ENCODE measurements at regions of chr5 and their contacts with region 1.

Region 1: DNA sequence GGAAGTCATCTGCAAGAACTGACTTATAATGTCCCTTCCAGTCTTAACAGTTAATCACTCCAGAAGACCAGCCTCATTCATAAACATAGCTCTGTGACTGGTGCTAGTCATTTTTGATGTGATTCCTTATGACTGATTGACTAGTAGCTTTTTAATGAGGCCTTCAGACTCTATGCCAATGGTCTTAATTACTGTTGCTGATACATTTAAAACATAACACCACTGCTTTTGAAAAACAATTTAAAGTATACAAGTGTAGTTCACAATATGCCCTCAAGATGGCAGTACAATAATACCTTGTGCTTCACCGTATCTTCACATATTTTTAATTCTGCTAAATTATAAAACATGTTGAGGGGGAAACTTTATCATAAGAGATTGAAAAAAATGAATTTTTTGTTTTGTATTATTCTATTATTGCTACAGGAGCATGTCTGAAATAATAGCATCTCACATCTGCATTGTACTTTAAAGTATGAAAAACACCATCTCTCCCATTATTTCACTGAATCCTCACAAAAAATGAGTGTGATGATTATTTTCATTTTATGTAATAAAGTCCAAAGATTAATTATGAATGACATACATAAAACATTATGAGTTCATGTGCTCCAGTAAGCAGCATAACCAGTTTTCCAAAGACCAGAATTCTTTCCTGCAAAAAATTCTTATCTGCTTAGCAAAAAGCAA is 55.2 kb upstream of the SHISAL2B start:
- DNase-seq: no peak
- H3K4me3 ChIP-seq: no peak overlapping the region
- H3K27ac ChIP-seq: no peak overlapping the region
- H3K4me1 ChIP-seq: peaks cover 0 to 3% (median 1%) of the 10 kb centered on the region in 4 experiments; a peak in 3 of 7 replicates
- H3K27me3 ChIP-seq: no peaks in the 10 kb centered on the region
- CTCF ChIP-seq: peak in 2 of 3 experiments; percentile 41 to 49; a peak in 2 of 4 replicates
- EP300 ChIP-seq: no peak
- POLR2A ChIP-seq: no peak
- RAD21 ChIP-seq: peak; percentile 66 to 86

Region 2: DNA sequence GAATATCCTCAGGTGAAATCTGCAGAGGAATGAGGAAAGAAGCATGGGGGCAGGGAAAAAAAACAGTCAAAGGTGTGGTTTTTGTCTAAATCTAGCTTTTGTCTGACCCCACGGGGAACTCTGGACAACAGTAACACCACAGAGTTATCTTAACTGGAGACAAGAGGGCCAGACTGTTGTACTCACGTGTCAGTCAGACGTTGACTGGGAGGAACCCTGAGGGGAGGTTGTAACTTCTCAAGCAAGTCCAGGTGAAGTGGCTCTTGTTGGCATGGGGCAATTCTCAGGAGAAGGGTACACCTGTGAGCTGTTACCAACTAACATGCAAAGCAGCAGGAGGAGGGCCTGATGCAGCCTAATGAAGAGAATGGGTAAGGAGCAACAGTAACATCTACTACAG is 11.0 kb after region 1 on chr5:
- CTCF ChIA-PET with region 1: interaction called, 39 read pairs
- POLR2A ChIA-PET with region 1: no interaction called
- DNase-seq: no peak
- H3K4me3 ChIP-seq: no peak overlapping the region
- H3K27ac ChIP-seq: no peak overlapping the region
- H3K4me1 ChIP-seq: peaks cover 0 to 9% (median 4%) of the 10 kb centered on the region in 4 experiments; a peak in 2 of 7 replicates
- H3K27me3 ChIP-seq: no peaks in the 10 kb centered on the region
- CTCF ChIP-seq: no peak
- EP300 ChIP-seq: no peak
- POLR2A ChIP-seq: no peak
- RAD21 ChIP-seq: no peak

Region 3: DNA sequence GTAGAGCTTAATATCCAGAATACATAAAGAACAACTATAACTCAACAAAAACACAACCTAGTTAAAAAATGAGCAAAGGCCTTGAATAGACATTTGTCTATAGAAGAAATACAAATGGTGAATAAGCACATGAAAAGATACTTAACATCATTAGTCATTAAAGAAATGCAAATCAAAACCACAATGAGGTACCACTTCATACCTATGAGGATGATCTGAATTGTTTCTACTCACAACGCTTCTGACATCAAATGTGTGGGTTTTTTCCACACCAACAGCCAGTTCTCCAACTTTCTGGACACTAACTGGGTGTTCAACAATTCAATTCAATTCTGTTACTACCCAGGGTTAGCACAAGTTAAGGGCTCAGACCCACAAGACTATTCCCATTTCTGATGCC is 111.3 kb after region 1 on chr5:
- CTCF ChIA-PET with region 1: interaction called, 11 read pairs
- POLR2A ChIA-PET with region 1: no interaction called
- DNase-seq: no peak
- H3K4me3 ChIP-seq: no peak overlapping the region
- H3K27ac ChIP-seq: no peak overlapping the region
- H3K4me1 ChIP-seq: peaks cover 0 to 2% (median 0%) of the 10 kb centered on the region in 4 experiments; a peak in 2 of 7 replicates
- H3K27me3 ChIP-seq: no peaks in the 10 kb centered on the region
- CTCF ChIP-seq: no peak
- EP300 ChIP-seq: no peak
- POLR2A ChIP-seq: no peak
- RAD21 ChIP-seq: no peak

Region 4: DNA sequence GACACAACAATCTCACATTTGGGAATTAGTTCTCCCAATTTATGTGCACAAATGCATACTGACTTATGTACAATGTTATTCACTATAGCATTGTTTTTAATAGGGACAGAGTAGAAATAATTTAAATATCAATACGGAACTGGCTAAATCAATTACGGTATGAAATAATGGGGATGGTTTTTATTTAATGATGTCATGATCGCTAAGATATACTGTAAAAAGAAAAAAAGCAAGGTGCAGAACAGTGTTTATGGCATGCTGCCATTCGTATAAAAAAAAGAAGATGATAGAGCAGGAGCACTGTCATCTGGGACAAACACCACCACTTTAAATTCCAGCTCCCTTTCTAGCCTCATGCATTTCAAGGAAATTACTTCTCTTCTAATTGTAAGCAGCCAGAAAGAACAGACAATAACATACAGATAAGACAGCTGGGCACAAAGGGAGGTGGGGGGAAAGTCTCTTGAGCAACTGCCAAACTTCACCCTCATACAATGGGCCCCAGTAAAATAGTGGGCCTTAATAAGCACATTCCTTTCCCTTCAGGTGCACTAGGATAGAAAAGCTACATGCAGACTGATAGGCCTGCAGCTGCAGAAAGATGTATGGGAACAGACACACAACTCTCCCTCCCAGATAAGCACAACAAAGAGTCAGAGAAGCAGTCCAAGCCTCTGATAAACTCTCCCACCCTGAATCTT is 125.0 kb after region 1 on chr5:
- CTCF ChIA-PET with region 1: interaction called, 14 read pairs
- POLR2A ChIA-PET with region 1: no interaction called
- DNase-seq: no peak
- H3K4me3 ChIP-seq: no peak overlapping the region
- H3K27ac ChIP-seq: no peak overlapping the region
- H3K4me1 ChIP-seq: no peaks in the 10 kb centered on the region; a peak in 1 of 7 replicates
- H3K27me3 ChIP-seq: no peaks in the 10 kb centered on the region
- CTCF ChIP-seq: no peak
- EP300 ChIP-seq: no peak
- POLR2A ChIP-seq: no peak
- RAD21 ChIP-seq: no peak

Region 5: DNA sequence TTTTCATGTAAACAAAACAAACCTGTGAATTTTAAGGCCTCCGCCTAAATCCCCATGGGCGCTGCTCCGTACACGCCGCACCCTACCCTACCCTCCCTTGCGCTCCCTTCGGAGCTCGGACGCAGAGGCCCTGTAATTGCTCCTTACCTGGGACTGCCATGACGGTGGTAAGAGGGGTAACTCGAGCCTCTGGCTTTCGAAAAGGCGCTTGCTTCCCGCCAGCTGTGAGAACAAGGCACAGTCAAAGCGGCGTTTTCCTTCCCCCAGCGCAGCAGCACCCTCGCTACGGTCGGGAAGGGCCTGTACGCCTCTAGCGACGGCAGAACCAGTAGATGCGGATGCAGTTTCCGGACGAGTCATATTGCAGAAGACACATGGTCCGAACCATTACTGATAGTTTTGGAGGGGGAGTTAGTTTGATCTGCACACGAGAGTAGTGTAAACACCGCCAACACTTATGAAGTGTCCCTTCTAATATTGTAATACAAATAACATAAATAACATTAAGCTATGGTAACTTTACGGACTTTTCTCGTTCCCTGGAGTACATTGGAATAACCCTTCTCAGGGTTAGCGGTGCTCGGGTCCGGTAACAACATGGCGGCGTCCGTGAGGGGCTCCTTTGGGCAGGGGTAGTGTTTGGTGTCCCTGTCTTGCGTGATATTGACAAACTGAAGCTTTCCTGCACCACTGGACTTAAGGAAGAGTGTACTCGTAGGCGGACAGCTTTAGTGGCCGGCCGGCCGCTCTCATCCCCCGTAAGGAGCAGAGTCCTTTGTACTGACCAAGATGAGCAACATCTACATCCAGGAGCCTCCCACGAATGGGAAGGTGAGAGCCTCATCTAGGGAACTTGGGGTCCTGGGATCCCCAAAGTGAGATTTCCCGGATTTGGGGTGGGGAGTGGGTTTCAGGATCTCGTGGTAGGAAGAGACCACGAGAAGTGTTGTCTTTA is 133.5 kb after region 1 on chr5 and contains the starts of genes CWC27 and SREK1IP1:
- CTCF ChIA-PET with region 1: interaction called, 14 read pairs
- POLR2A ChIA-PET with region 1: interaction called, 4 read pairs
- DNase-seq: peak; percentile 69 to 85
- H3K4me3 ChIP-seq: peak within 1 kb of the TSS; percentile 79 to 100 (median 98)
- H3K27ac ChIP-seq: peak within 1 kb of the TSS; percentile 97
- H3K4me1 ChIP-seq: peaks cover 0 to 9% (median 3%) of the 10 kb centered on the region in 4 experiments; a peak in 4 of 7 replicates
- H3K27me3 ChIP-seq: no peaks in the 10 kb centered on the region
- CTCF ChIP-seq: peak in 1 of 3 experiments; percentile 6; a peak in 1 of 4 replicates
- EP300 ChIP-seq: peak in 1 of 2 experiments; percentile 95; a peak in 2 of 3 replicates
- POLR2A ChIP-seq: peak; percentile 85 to 95
- RAD21 ChIP-seq: peak; percentile 15 to 28; a peak in 2 of 4 replicates
- total RNA-seq, gene CWC27: 41.1 and 43.4 TPM in 2 replicates
- total RNA-seq, gene SREK1IP1: 37.2 and 39.0 TPM in 2 replicates

Region 6: DNA sequence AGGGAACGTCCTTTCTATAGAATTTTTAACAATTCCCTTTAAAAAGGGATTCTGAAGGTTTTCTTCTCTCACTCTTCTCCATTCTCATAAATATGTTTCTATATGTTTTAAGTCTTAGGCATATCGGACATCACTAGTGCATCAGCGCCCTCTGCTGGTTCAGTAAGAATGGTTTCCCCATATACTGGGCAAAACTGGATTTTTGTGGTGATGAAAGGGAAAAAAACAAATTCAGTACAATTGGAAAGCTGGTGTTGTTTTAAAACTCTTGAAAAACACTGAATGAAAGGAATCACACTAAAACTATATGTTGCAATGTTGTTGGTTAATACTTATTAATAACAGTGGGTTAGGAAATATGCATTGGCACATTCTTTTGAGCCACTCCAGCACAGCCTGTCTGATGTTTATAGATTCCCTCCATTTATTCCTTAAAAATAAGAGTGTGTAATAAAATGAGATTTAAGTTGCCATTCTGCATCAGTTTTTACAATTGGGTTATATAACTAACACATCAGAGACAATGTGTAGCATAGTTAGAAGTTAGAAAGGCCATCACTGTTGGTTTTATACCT is 149.4 kb after region 1 on chr5:
- CTCF ChIA-PET with region 1: interaction called, 57 read pairs
- POLR2A ChIA-PET with region 1: interaction called, 3 read pairs
- DNase-seq: peak in 1 of 2 experiments; percentile 72
- H3K4me3 ChIP-seq: no peak overlapping the region
- H3K27ac ChIP-seq: no peak overlapping the region
- H3K4me1 ChIP-seq: no peaks in the 10 kb centered on the region
- H3K27me3 ChIP-seq: no peaks in the 10 kb centered on the region
- CTCF ChIP-seq: peak in 2 of 3 experiments; percentile 69 to 79; a peak in 3 of 4 replicates
- EP300 ChIP-seq: no peak
- POLR2A ChIP-seq: no peak
- RAD21 ChIP-seq: peak; percentile 88 to 89